ENCODE measurements at regions of chr11 and their contacts with region 1.

Region 1: GRCh38 chr11:66686801-66687750 is 9.4 kb upstream of the RBM4B start:
- DNase-seq: no peak
- H3K4me3 ChIP-seq: no peak overlapping the region
- H3K27ac ChIP-seq: no peak overlapping the region
- H3K4me1 ChIP-seq: no peaks in the 10 kb centered on the region
- H3K27me3 ChIP-seq: no peaks in the 10 kb centered on the region
- CTCF ChIP-seq: no peak
- POLR2A ChIP-seq: no peak

Region 2: GRCh38 chr11:66418168-66418985 is 268.7 kb before region 1 on chr11:
- intact Hi-C with region 1: loop called (anchors 10 kb)
- DNase-seq: peak; percentile 85 to 93
- H3K4me3 ChIP-seq: no peak overlapping the region
- H3K27ac ChIP-seq: peak overlapping the region; percentile 75 to 90
- H3K4me1 ChIP-seq: peaks cover 0 to 14% of the 10 kb centered on the region in 2 donors
- H3K27me3 ChIP-seq: no peaks in the 10 kb centered on the region
- CTCF ChIP-seq: peak; percentile 42 to 62 (median 54)
- POLR2A ChIP-seq: no peak